A549 (cell line): ENCODE measurements at regions of chr11 and their contacts with region 1.

Region 1: DNA sequence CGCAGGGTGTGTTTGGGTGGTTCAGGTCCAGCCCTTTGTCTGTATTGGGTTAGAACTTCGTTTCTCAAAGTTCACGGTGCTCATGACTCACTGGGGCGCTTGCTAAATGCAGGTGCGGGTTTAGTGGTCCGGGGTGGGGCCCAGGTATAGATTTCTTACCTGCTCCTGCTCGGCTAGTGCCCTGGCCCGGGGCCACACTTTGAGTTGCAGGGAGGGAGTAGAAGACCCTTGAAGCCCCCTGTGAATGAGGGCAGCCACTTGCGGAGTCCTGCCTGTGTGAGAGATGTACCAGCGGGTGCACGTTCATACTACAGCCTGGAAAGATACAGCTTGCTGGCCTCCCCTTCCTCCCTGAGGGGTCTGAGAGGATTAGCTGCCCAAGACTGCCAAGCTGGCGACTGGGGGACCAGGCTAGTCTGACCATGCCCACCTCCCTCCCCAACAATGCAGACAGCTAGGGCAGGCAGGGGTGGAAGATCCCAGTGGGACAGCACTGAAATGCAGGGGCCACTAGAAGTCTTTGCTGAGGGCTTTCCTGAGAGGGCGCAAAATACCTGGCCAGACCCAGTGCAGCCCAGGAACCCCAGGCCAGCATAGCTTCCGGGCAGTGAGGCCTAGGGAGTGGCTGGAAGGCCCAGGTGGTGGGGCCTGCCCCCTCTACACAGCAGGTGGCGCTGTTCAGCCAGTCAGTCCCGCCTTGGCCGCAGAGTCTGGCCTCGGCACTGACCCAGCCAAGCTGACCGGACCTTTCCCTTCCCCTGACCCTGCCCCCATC is 5.1 kb upstream of the MYRF start:
- DNase-seq: peak; percentile 78 to 79
- ATAC-seq: peak; percentile 76 to 93
- H3K4me3 ChIP-seq: no peak overlapping the region
- H3K27ac ChIP-seq: peak overlapping the region; percentile 40 to 70; a peak in 5 of 6 replicates
- H3K4me1 ChIP-seq: peaks cover 14% of the 10 kb centered on the region
- CTCF ChIP-seq: peak; percentile 89
- EP300 ChIP-seq: no peak
- POLR2A ChIP-seq: no peak
- RAD21 ChIP-seq: peak; percentile 88 to 91

Region 2: DNA sequence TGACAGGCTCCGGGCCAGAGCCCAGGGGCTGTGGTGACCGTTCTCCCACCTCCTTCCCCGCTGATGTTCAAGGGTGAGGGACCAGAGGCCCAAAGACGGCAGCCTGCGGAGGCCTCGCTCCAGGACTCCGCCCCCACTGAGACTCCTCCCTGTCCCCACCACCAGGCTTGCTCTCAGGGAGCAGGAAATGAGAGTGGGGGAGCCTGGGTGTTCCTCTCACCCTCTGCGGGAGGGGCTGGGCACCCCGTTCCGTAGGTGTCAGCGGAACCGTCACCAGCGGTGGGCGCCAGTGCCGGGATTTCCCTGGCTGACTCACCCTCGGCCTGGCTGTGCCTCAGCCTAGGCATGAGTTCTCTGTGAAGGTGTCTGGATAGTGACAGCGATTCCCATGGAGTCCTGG is 51.5 kb before region 1 on chr11:
- CTCF ChIA-PET with region 1: interaction called, 10 read pairs
- POLR2A ChIA-PET with region 1: no interaction called
- DNase-seq: peak; percentile 74 to 83
- ATAC-seq: peak; percentile 55 to 75
- H3K4me3 ChIP-seq: no peak overlapping the region; the same call in 2 of the 3 replicates
- H3K27ac ChIP-seq: peak overlapping the region; percentile 75 to 88
- H3K4me1 ChIP-seq: peaks cover 75% of the 10 kb centered on the region
- CTCF ChIP-seq: no peak
- EP300 ChIP-seq: no peak
- POLR2A ChIP-seq: no peak
- RAD21 ChIP-seq: no peak

Region 3: DNA sequence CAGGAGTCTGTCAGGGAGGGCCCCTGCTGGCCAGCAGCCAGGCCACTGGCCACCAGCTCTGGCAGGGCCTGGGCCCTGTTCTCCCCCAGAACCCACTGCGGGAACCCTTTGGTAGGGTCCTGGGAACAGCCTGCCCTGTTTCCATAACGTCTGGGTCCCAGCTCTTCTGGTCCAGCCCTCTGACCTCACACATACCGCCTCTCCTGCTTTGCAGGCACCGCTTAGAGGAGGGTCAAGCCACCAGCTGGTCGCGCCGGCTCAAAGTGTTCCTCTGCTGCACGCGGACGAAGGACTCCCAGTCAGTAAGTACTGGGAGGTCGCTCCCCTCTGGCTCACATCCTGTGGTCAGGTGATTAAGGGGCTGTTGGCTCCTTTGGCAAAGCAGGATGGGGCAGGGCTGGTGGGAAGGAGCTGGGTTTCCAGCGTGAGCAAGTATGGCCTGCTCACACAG is 21.6 kb before region 1 on chr11:
- CTCF ChIA-PET with region 1: interaction called, 21 read pairs
- POLR2A ChIA-PET with region 1: no interaction called
- DNase-seq: no peak
- ATAC-seq: no peak
- H3K4me3 ChIP-seq: no peak overlapping the region
- H3K27ac ChIP-seq: no peak overlapping the region
- H3K4me1 ChIP-seq: peaks cover 27% of the 10 kb centered on the region
- CTCF ChIP-seq: no peak
- EP300 ChIP-seq: no peak
- POLR2A ChIP-seq: no peak
- RAD21 ChIP-seq: no peak

Region 4: DNA sequence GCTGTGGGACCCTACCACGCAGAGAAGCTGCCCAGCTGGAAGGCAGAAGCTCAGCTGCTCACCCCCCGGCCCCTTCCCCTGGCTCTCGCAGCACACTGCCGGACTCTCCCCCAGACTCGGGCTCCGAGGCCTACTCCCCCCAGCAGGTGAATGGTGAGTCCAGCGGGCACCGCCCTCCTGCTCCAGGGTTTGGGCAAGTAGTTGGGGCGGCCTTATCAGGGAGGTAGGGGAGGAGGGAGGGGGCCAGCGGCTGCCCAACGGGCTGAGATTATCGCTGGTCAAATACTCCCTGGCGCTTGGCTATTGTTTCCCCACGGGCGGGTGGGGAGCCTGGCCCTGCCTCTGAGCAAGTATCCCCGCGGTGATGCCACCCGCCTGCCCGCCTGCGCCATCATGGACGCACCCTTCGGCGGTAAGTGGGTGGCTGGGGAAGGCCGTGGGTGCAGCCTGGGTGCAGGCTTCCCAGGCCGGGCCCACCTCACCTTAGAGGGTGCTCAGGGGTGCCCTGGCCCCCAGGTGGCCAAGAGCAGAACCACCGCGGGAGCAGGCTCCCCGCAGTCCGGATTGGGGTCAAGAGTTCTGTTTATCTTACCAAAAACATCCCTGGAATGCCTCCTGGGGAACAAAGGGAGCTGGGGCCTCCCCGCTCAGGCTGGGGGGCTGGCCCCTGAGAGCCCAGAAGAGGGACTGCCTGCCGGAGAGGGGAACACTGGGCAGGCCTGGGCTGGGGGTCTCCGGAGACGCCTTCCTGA is 22.0 kb after region 1 on chr11:
- CTCF ChIA-PET with region 1: interaction called, 56 read pairs
- POLR2A ChIA-PET with region 1: no interaction called
- DNase-seq: peak in 1 of 2 experiments; percentile 58
- ATAC-seq: peak; percentile 35 to 67; a peak in 3 of 6 replicates
- H3K4me3 ChIP-seq: no peak overlapping the region
- H3K27ac ChIP-seq: peak overlapping the region; percentile 40 to 70; a peak in 5 of 6 replicates
- H3K4me1 ChIP-seq: peaks cover 75% of the 10 kb centered on the region
- CTCF ChIP-seq: 0 out of 3 replicates have a peak, but pooled peaks have one; percentile 12
- EP300 ChIP-seq: no peak
- POLR2A ChIP-seq: no peak
- RAD21 ChIP-seq: peak in 1 of 2 experiments; percentile 7; a peak in 1 of 5 replicates

Region 5: DNA sequence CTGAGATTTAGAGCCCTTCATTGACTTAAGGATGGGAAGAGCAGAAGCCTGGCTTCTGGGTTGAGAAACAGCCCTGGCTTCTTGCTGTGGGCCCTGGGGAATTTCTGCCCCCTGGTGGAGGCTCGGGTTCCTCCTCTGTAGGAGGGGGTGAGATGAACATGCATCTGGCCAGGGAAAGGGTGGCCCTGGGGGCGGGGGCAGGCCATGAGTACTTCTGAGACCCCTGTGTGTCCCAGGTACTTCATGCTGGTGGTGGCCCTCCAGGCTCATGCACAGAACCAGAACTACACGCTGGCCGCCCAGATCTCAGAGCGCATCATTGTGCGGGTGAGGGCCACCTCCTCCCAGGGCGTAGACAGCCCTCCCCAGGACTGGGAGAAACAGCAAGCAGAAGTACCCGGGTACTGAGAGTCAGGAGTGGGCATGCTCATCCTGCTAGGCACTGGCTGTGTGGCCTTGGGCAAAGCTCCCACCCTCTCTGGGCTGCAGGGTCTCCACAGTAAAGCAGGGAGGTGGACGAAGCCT is 29.2 kb after region 1 on chr11:
- CTCF ChIA-PET with region 1: interaction called, 71 read pairs
- POLR2A ChIA-PET with region 1: no interaction called
- DNase-seq: peak; percentile 81 to 94
- ATAC-seq: peak; percentile 61 to 89
- H3K4me3 ChIP-seq: no peak overlapping the region
- H3K27ac ChIP-seq: 0 out of 6 replicates have a peak overlapping the region, but pooled peaks of 1 of the 2 experiments have one; percentile 42
- H3K4me1 ChIP-seq: peaks cover 18% of the 10 kb centered on the region
- CTCF ChIP-seq: peak; percentile 80
- EP300 ChIP-seq: no peak
- POLR2A ChIP-seq: no peak
- RAD21 ChIP-seq: peak; percentile 77 to 85

Region 6: GRCh38 chr11:61783717-61784519 is 36.5 kb after region 1 on chr11:
- CTCF ChIA-PET with region 1: interaction called, 147 read pairs
- POLR2A ChIA-PET with region 1: no interaction called
- DNase-seq: no peak
- ATAC-seq: no peak
- H3K4me3 ChIP-seq: no peak overlapping the region
- H3K27ac ChIP-seq: no peak overlapping the region
- H3K4me1 ChIP-seq: no peaks in the 10 kb centered on the region
- CTCF ChIP-seq: no peak
- EP300 ChIP-seq: no peak
- POLR2A ChIP-seq: no peak
- RAD21 ChIP-seq: no peak

Region 7: GRCh38 chr11:62013591-62014476 is 266.5 kb after region 1 on chr11:
- CTCF ChIA-PET with region 1: no interaction called
- POLR2A ChIA-PET with region 1: no interaction called
- DNase-seq: peak in 1 of 2 experiments; percentile 73
- ATAC-seq: peak; percentile 64 to 73
- H3K4me3 ChIP-seq: peak overlapping the region; percentile 19; the same call in 1 of the 3 replicates
- H3K27ac ChIP-seq: peak overlapping the region; percentile 88 to 90
- H3K4me1 ChIP-seq: peaks cover 49% of the 10 kb centered on the region
- CTCF ChIP-seq: no peak
- EP300 ChIP-seq: peak in 1 of 2 experiments; percentile 41; a peak in 1 of 5 replicates
- POLR2A ChIP-seq: no peak
- RAD21 ChIP-seq: no peak

Region 8: GRCh38 chr11:62061351-62062222 is 314.2 kb after region 1 on chr11:
- CTCF ChIA-PET with region 1: no interaction called
- POLR2A ChIA-PET with region 1: no interaction called
- DNase-seq: no peak
- ATAC-seq: no peak
- H3K4me3 ChIP-seq: no peak overlapping the region
- H3K27ac ChIP-seq: no peak overlapping the region
- H3K4me1 ChIP-seq: no peaks in the 10 kb centered on the region
- CTCF ChIP-seq: no peak
- EP300 ChIP-seq: no peak
- POLR2A ChIP-seq: no peak
- RAD21 ChIP-seq: no peak